Thyroid gland (tissue), 4 donors: ENCODE measurements at regions of chr12 and their contacts with region 1.

Region 1: DNA sequence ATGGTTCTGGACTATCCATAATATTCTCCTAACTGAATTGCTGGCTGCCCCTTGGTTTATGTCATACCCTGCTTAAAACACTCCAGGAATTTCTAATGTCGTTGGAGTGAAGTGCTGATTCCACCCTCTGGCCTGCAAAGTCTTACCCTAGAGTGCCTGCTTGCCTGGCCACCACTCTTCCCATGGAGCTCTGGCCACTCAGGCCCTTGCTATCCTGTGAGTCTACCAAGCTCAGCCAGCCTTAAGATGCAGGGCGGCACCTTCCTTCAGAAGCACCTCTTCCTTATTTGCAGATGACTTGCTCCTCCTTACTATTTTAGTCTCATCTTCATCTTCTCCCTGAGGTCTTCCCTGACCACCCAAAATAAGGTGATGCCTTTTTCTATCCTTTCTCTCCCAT is 35.3 kb downstream of the SLC6A15 start:
- DNase-seq: no peak
- H3K4me3 ChIP-seq: no peak overlapping the region
- H3K27ac ChIP-seq: no peak overlapping the region
- H3K4me1 ChIP-seq: no peaks in the 10 kb centered on the region
- H3K27me3 ChIP-seq: no peaks in the 10 kb centered on the region
- CTCF ChIP-seq: no peak
- POLR2A ChIP-seq: no peak

Region 2: DNA sequence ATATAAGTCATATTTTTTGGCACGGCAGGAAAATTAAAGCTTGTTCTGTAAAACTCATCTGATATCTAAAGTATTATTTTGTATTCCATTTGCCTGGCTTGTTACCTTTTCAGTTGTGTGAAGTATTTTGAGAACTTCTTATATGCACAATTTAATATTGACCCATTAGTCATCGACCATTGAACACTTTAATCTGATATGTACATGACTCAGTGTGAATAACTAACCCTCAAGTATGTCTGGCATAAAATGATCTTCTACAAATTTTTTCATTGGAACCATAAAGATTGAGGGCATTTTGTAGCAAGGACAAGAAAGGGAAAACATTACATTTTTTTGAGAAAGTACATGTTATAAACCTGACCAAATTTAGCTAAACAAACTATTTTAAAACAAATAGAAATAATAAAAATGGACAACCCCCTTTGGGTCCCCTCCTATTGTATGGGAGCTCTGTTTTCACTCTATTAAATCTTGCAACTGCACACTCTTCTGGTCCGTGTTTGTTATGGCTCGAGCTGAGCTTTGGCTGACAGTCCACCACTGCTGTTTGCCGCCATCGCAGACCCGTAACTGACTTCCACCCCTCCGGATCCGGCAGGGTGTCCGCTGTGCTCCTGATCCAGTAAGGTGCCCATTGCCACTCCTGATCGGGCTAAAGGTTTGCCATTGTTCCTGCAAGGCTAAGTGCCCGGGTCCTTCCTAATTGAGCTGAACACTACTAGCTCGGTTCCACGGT is 83.6 kb before region 1 on chr12:
- intact Hi-C with region 1: no loop called
- DNase-seq: no peak
- H3K4me3 ChIP-seq: no peak overlapping the region
- H3K27ac ChIP-seq: no peak overlapping the region
- H3K4me1 ChIP-seq: no peaks in the 10 kb centered on the region
- H3K27me3 ChIP-seq: no peaks in the 10 kb centered on the region
- CTCF ChIP-seq: no peak
- POLR2A ChIP-seq: no peak

Region 3: GRCh38 chr12:85029456-85029855 is 152.1 kb after region 1 on chr12:
- intact Hi-C with region 1: loop called (anchors 2 kb)
- DNase-seq: no peak
- H3K4me3 ChIP-seq: no peak overlapping the region
- H3K27ac ChIP-seq: no peak overlapping the region
- H3K4me1 ChIP-seq: no peaks in the 10 kb centered on the region
- H3K27me3 ChIP-seq: no peaks in the 10 kb centered on the region
- CTCF ChIP-seq: peak in 4 of 6 experiments; percentile 10 to 66 (median 56)
- POLR2A ChIP-seq: no peak